ENCODE measurements at regions of chr13 and their contacts with region 1.

Region 1: GRCh38 chr13:111046590-111047141 is 68.4 kb upstream of the ARHGEF7 start:
- DNase-seq: peak; percentile 64 to 73
- ATAC-seq: peak; percentile 86 to 92 (median 88)
- H3K4me3 ChIP-seq: no peak overlapping the region
- H3K27ac ChIP-seq: peak overlapping the region; percentile 70
- H3K4me1 ChIP-seq: peaks cover 11% of the 10 kb centered on the region
- H3K27me3 ChIP-seq: no peaks in the 10 kb centered on the region
- CTCF ChIP-seq: peak; percentile 40

Region 2: GRCh38 chr13:110593430-110594130 is 453.1 kb before region 1 on chr13:
- intact Hi-C with region 1: loop called in 1 of 2 experiments (anchors 10 kb)
- DNase-seq: no peak
- ATAC-seq: peak; percentile 74 to 96 (median 91)
- H3K4me3 ChIP-seq: no peak overlapping the region
- H3K27ac ChIP-seq: no peak overlapping the region
- H3K4me1 ChIP-seq: peaks cover 4% of the 10 kb centered on the region
- H3K27me3 ChIP-seq: no peaks in the 10 kb centered on the region
- CTCF ChIP-seq: peak; percentile 62

Region 3: DNA sequence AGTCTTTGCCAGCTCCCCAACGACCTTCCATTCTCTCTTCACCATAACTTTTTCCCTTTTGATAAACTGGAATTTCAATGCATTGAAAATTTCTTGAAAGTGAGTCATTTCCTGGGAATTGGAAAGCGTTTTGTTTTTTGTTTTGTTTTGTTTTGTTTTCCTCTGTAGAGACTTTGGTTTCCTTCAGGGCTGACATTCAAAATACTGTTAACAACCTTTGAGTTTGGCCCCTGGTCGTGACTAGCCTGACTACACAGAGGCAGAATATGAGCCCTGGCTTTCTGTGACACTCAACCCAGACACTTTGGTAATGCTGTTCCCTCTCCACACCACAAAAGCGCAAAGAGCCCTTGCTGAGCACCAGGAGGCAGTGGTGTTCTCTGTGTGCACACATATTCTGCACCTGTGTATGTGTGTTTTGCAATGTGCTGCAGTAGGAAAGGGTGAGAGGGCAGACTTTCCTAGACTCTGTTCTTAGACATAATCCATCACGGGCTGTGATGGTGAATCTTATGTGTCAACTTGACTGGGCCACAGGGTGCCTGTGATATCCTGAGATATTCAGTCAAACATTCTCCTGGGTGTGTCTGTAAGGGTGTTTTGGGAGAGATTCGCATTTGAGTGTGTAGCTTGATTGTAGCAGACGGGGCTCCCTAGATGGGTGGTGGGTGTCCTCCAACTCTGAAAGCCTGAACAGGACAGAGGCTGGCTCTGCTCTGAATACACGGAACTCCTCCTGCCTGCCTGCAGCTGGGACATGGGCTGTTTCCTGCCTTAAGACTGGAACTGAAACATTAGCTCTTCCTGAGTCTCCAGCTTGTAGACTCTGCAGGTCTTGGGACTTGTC is 102.3 kb before region 1 on chr13:
- intact Hi-C with region 1: loop called in 1 of 2 experiments (anchors 1 kb)
- DNase-seq: peak in 1 of 2 donors; percentile 35
- ATAC-seq: peak; percentile 91 to 95 (median 93)
- H3K4me3 ChIP-seq: no peak overlapping the region
- H3K27ac ChIP-seq: no peak overlapping the region
- H3K4me1 ChIP-seq: no peaks in the 10 kb centered on the region
- H3K27me3 ChIP-seq: peaks cover 0 to 2% (median 0%) of the 10 kb centered on the region in 3 donors
- CTCF ChIP-seq: peak; percentile 64

Measured in psoas muscle (tissue), 8 donors.